BJ (cell line): ENCODE measurements at regions of chr4 and their contacts with region 1.

Region 1: GRCh38 chr4:53563824-53564223 is 27.5 kb downstream of the LNX1 start:
- DNase-seq: no peak
- H3K4me3 ChIP-seq: no peak overlapping the region
- H3K27me3 ChIP-seq: no peaks in the 10 kb centered on the region
- CTCF ChIP-seq: no peak

Region 2: DNA sequence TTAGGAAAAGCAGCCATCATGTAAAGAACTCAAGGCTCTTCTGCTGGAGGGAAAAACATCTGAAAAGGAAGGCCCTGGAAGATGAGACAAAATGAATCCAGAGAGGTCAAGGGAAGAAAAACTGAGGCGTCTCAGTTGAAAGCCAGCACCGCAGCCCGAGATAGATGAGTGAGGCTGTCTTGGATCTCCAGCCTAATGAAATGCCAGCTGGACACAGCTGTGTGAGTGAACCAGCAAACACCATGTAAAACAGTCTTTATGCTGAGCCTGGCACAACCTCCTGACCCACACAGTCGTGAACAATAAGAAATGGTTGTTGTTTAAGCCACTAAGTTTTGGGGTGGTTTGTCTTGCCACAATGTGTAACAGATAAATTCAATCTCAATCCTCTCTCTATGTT is 750.3 kb before region 1 on chr4:
- CTCF ChIA-PET with region 1: no interaction called
- POLR2A ChIA-PET with region 1: no interaction called
- DNase-seq: no peak
- H3K4me3 ChIP-seq: no peak overlapping the region
- H3K27me3 ChIP-seq: no peaks in the 10 kb centered on the region
- CTCF ChIP-seq: no peak

Region 3: DNA sequence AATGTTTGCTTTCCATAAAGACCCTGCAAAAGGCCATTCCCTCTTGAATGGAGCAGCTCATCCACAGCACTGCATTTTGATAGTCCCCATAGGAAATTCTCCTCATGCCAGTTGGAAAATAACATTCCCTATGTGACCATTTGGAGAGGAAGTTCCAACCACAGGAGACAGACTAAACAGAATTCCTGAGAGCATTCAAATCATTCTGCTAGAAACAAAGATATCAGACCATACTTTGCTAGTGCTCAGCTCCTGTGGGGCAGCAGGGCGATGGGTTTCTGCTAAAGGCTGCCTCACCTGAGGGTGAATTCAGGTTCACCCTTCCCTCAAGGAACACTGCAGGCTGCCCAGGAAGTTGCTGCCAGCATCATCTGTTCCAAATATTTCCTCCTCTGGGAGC is 31.3 kb before region 1 on chr4:
- CTCF ChIA-PET with region 1: no interaction called
- POLR2A ChIA-PET with region 1: no interaction called
- DNase-seq: peak; percentile 7
- H3K4me3 ChIP-seq: no peak overlapping the region
- H3K27me3 ChIP-seq: no peaks in the 10 kb centered on the region
- CTCF ChIP-seq: no peak

Region 4: GRCh38 chr4:53551958-53552357 is 11.9 kb before region 1 on chr4:
- CTCF ChIA-PET with region 1: interaction called, 10 read pairs
- POLR2A ChIA-PET with region 1: interaction called, 12 read pairs
- DNase-seq: no peak
- H3K4me3 ChIP-seq: no peak overlapping the region
- H3K27me3 ChIP-seq: no peaks in the 10 kb centered on the region
- CTCF ChIP-seq: no peak